ENCODE measurements at regions of chr9 and their contacts with region 1.

Region 1: GRCh38 chr9:16726718-16727451 is 143.6 kb downstream of the BNC2 start:
- DNase-seq: peak; percentile 84
- H3K4me3 ChIP-seq: peak overlapping the region; percentile 66 to 94 (median 84)
- H3K27ac ChIP-seq: peak overlapping the region; percentile 93
- H3K4me1 ChIP-seq: peaks cover 26% of the 10 kb centered on the region
- H3K27me3 ChIP-seq: no peaks in the 10 kb centered on the region
- CTCF ChIP-seq: no peak
- POLR2A ChIP-seq: peak; percentile 62

Region 2: DNA sequence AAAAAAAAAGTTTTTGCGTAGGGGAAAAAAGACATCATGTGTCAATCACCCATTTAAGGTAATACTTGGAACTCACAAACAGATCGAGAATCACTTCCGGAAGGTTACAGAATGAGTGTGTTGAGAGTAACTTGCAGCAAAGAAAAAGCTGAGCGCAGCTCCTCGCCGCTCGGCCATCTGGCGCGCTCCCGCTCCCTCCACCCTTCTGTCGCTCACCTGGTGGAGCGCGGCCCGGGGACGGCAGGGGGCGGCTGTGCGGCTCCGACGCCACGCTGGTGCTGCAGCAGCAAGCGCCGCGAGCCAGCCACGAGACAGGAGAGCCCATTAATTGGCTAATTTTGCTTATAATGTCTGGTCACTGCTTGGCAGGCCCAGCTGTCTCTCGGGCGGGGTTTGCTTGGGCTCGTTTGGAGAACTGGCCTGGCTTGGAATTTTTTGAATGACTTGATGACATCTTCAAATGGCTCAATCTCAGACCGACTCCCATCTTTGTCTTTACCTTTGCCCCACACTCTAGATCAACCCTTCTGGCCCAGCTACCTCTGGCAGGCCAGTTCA is 572.3 kb before region 1 on chr9:
- CTCF ChIA-PET with region 1: interaction called, 4 read pairs
- POLR2A ChIA-PET with region 1: no interaction called
- dilution Hi-C with region 1: no loop called
- intact Hi-C with region 1: loop called (anchors 5 kb)
- DNase-seq: peak; percentile 40
- H3K4me3 ChIP-seq: no peak overlapping the region
- H3K27ac ChIP-seq: no peak overlapping the region
- H3K4me1 ChIP-seq: peaks cover 5% of the 10 kb centered on the region
- H3K27me3 ChIP-seq: peaks cover 5 to 7% of the 10 kb centered on the region in 2 experiments
- CTCF ChIP-seq: peak; percentile 43 to 69
- POLR2A ChIP-seq: no peak

Region 3: DNA sequence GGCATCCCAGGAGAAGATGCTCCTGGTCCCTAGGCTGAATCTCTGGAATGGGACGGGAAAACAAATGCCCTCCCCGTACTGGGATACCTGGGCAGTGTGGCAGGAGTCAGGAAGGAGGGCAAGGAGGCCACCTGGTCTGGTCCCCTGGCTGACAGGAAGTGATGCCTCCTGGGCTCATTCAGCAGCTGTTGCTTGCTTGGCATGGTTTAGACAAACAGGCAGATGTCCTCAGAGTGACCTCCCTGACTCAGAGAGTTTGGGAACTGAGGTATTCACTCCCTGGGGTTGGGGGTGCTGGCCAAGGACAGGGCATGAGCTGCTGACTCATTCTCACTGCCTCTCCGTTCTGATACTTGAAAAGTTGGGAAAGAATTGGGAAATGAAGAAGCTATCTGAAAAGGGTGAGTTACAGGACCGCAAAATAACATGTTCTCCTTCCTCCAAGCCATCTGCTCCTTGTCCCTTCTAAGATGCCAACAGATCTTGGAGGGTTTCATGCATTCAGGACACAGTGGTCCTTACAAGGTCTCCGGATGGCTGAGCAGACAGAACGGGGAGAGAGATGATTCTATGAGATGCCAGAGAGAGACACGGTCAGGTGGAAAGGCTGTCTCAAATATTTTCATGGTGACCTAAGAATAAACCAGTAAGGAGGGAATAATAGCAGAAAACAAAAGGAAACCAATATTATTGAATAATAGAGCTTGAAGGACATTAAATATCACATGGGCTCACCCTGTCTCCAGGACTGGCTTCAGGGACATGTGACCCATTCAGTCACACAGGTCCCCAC is 390.9 kb before region 1 on chr9:
- CTCF ChIA-PET with region 1: no interaction called
- POLR2A ChIA-PET with region 1: no interaction called
- dilution Hi-C with region 1: no loop called
- intact Hi-C with region 1: loop called (anchors 5 kb)
- DNase-seq: peak; percentile 82
- H3K4me3 ChIP-seq: no peak overlapping the region
- H3K27ac ChIP-seq: peak overlapping the region; percentile 81
- H3K4me1 ChIP-seq: peaks cover 25% of the 10 kb centered on the region
- H3K27me3 ChIP-seq: no peaks in the 10 kb centered on the region
- CTCF ChIP-seq: no peak
- POLR2A ChIP-seq: no peak

Region 4: GRCh38 chr9:16575142-16575985 is 151.5 kb before region 1 on chr9:
- CTCF ChIA-PET with region 1: interaction called, 4 read pairs
- POLR2A ChIA-PET with region 1: no interaction called
- dilution Hi-C with region 1: no loop called
- intact Hi-C with region 1: loop called (anchors 5 kb)
- DNase-seq: peak; percentile 17
- H3K4me3 ChIP-seq: no peak overlapping the region
- H3K27ac ChIP-seq: no peak overlapping the region
- H3K4me1 ChIP-seq: no peaks in the 10 kb centered on the region
- H3K27me3 ChIP-seq: no peaks in the 10 kb centered on the region
- CTCF ChIP-seq: no peak
- POLR2A ChIP-seq: no peak

Region 5: DNA sequence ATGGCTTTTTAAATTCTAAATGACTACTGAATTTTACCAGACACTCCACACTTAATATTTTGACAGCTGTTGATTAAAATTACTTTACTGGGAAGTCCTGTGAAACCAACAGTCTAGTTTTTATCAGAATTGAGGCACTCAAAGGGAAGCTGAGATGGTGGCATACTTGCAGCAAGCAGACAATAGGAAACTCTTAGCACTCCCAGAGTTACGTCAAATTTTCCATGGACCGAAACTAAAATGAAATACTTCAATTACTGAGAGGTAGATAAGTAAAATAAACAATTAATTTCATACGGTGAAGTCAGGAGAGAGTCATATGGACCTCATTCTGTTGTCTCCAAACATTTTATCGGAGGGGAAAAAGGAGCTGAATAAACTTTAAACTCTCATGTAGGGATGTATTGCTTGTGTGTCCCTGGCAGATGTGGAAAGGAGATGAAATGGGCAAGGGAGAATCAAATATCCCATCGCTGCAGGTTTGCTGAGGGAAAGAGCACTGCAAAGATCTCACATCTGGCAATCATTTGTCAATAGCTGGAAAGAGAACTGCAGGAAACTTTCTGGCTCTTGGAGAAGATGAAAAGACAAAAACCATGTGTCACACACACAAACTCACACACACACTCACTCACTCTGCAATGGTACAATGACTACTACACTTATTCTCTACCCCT is 45.8 kb before region 1 on chr9:
- CTCF ChIA-PET with region 1: interaction called, 3 read pairs
- POLR2A ChIA-PET with region 1: no interaction called
- dilution Hi-C with region 1: no loop called
- intact Hi-C with region 1: loop called (anchors 2 kb)
- DNase-seq: peak; percentile 75
- H3K4me3 ChIP-seq: no peak overlapping the region
- H3K27ac ChIP-seq: no peak overlapping the region
- H3K4me1 ChIP-seq: peaks cover 4% of the 10 kb centered on the region
- H3K27me3 ChIP-seq: no peaks in the 10 kb centered on the region
- CTCF ChIP-seq: no peak
- POLR2A ChIP-seq: no peak

Region 6: GRCh38 chr9:16768816-16769215 is 41.9 kb after region 1 on chr9:
- CTCF ChIA-PET with region 1: no interaction called
- POLR2A ChIA-PET with region 1: no interaction called
- dilution Hi-C with region 1: no loop called
- intact Hi-C with region 1: no loop called
- DNase-seq: no peak
- H3K4me3 ChIP-seq: no peak overlapping the region
- H3K27ac ChIP-seq: no peak overlapping the region
- H3K4me1 ChIP-seq: no peaks in the 10 kb centered on the region
- H3K27me3 ChIP-seq: no peaks in the 10 kb centered on the region
- CTCF ChIP-seq: no peak
- POLR2A ChIP-seq: no peak

Region 7: GRCh38 chr9:16871356-16872151 is 144.7 kb after region 1 on chr9:
- CTCF ChIA-PET with region 1: no interaction called
- POLR2A ChIA-PET with region 1: no interaction called
- dilution Hi-C with region 1: no loop called
- intact Hi-C with region 1: loop called (anchors 2 kb)
- DNase-seq: peak; percentile 59
- H3K4me3 ChIP-seq: peak overlapping the region; percentile 81 to 98 (median 88)
- H3K27ac ChIP-seq: peak overlapping the region; percentile 17
- H3K4me1 ChIP-seq: peaks cover 14% of the 10 kb centered on the region
- H3K27me3 ChIP-seq: peaks cover 2 to 3% of the 10 kb centered on the region in 2 experiments
- CTCF ChIP-seq: no peak
- POLR2A ChIP-seq: no peak